Endothelial cell of umbilical vein (primary cell): ENCODE measurements at regions of chr12 and their contacts with region 1.

Region 1: GRCh38 chr12:75784591-75784990 is 247.0 kb downstream of the PHLDA1 start:
- DNase-seq: peak; percentile 44
- H3K4me3 ChIP-seq: no peak overlapping the region
- H3K27ac ChIP-seq: no peak overlapping the region
- H3K4me1 ChIP-seq: peaks cover 19% of the 10 kb centered on the region
- H3K27me3 ChIP-seq: no peaks in the 10 kb centered on the region
- CTCF ChIP-seq: no peak
- POLR2A ChIP-seq: no peak

Region 2: DNA sequence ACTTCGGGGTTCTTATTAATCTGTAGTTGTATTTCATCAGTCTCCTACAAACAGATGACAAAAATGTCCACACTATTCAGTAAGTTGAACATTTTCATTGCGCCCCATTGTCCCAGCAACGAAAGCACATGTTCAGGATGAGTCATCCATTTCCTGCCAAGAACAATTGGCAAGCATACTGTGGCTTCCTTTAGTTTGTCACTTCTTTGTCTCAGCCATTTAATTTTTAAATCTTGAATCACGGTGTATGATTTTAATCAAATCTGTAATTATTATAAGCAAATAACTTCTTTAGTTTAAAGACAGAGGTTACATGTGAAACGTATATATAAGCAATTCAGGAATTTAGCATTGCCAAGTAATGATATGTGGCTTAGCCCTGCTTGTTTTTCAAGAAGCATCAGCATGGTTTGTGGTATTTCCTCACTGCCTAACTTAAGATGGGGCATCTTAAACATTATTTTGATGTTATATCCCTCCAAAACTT is 61.8 kb before region 1 on chr12:
- CTCF ChIA-PET with region 1: interaction called, 4 read pairs
- POLR2A ChIA-PET with region 1: no interaction called
- dilution Hi-C with region 1: no loop called
- intact Hi-C with region 1: loop called (anchors 2 kb)
- DNase-seq: peak; percentile 95
- H3K4me3 ChIP-seq: no peak overlapping the region
- H3K27ac ChIP-seq: peak overlapping the region; percentile 92
- H3K4me1 ChIP-seq: peaks cover 46% of the 10 kb centered on the region
- H3K27me3 ChIP-seq: no peaks in the 10 kb centered on the region
- CTCF ChIP-seq: no peak
- POLR2A ChIP-seq: no peak

Region 3: DNA sequence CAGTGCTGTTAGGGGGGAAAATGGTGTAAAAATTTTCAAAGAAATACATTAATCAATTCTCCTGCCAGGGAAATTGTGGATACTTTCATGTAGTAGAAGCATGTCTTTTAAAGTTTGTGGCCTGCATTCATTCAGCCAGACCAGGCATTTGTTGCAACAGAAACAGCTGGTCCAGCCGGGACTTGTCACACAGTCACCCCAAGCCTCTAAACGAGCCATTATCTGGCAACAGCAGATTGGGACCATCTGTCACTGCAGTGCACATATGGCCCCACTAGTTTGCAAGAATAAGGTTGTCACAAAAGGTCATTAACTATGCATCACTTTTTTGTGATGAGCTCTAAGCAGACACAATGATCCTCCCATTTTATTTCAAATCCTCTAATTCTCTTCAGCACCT is 53.1 kb after region 1 on chr12:
- CTCF ChIA-PET with region 1: no interaction called
- POLR2A ChIA-PET with region 1: no interaction called
- dilution Hi-C with region 1: no loop called
- intact Hi-C with region 1: no loop called
- DNase-seq: no peak
- H3K4me3 ChIP-seq: no peak overlapping the region
- H3K27ac ChIP-seq: no peak overlapping the region
- H3K4me1 ChIP-seq: peaks cover 5% of the 10 kb centered on the region
- H3K27me3 ChIP-seq: no peaks in the 10 kb centered on the region
- CTCF ChIP-seq: no peak
- POLR2A ChIP-seq: no peak

Region 4: GRCh38 chr12:76337583-76337982 is 553.0 kb after region 1 on chr12:
- CTCF ChIA-PET with region 1: no interaction called
- POLR2A ChIA-PET with region 1: no interaction called
- dilution Hi-C with region 1: no loop called
- intact Hi-C with region 1: loop called (anchors 1 kb)
- DNase-seq: peak; percentile 52
- H3K4me3 ChIP-seq: no peak overlapping the region
- H3K27ac ChIP-seq: peak overlapping the region; percentile 55
- H3K4me1 ChIP-seq: peaks cover 28% of the 10 kb centered on the region
- H3K27me3 ChIP-seq: no peaks in the 10 kb centered on the region
- CTCF ChIP-seq: no peak
- POLR2A ChIP-seq: no peak